GM12878 (cell line): ENCODE measurements at regions of chr2 and their contacts with region 1.

Region 1: GRCh38 chr2:64865073-64865830 is 123.9 kb upstream of the SLC1A4 start:
- DNase-seq: no peak
- ATAC-seq: peak; percentile 84
- H3K4me3 ChIP-seq: peak overlapping the region; percentile 82
- H3K27ac ChIP-seq: peak overlapping the region; percentile 70
- H3K4me1 ChIP-seq: peaks cover 49% of the 10 kb centered on the region
- H3K27me3 ChIP-seq: no peaks in the 10 kb centered on the region
- CTCF ChIP-seq: peak; percentile 62 to 79 (median 64); a peak in 5 of 6 replicates
- EP300 ChIP-seq: no peak
- POLR2A ChIP-seq: no peak
- RAD21 ChIP-seq: peak; percentile 71

Region 2: GRCh38 chr2:64595397-64596160 is 269.7 kb before region 1 on chr2:
- CTCF ChIA-PET with region 1: interaction called, 7 read pairs
- POLR2A ChIA-PET with region 1: interaction called, 3 read pairs
- RAD21 ChIA-PET with region 1: interaction called, 6 read pairs
- SMC1A ChIA-PET with region 1: interaction called, 24 read pairs
- in situ Hi-C with region 1: loop called (anchors 10 kb)
- intact Hi-C with region 1: no loop called
- DNase-seq: no peak
- ATAC-seq: no peak
- H3K4me3 ChIP-seq: no peak overlapping the region
- H3K27ac ChIP-seq: no peak overlapping the region
- H3K4me1 ChIP-seq: peaks cover 6% of the 10 kb centered on the region; the same call in 1 of the 2 replicates
- H3K27me3 ChIP-seq: no peaks in the 10 kb centered on the region
- CTCF ChIP-seq: peak in 1 of 3 experiments; percentile 34; a peak in 2 of 6 replicates
- EP300 ChIP-seq: no peak
- POLR2A ChIP-seq: no peak
- RAD21 ChIP-seq: no peak; the same call in 1 of the 2 replicates

Region 3: DNA sequence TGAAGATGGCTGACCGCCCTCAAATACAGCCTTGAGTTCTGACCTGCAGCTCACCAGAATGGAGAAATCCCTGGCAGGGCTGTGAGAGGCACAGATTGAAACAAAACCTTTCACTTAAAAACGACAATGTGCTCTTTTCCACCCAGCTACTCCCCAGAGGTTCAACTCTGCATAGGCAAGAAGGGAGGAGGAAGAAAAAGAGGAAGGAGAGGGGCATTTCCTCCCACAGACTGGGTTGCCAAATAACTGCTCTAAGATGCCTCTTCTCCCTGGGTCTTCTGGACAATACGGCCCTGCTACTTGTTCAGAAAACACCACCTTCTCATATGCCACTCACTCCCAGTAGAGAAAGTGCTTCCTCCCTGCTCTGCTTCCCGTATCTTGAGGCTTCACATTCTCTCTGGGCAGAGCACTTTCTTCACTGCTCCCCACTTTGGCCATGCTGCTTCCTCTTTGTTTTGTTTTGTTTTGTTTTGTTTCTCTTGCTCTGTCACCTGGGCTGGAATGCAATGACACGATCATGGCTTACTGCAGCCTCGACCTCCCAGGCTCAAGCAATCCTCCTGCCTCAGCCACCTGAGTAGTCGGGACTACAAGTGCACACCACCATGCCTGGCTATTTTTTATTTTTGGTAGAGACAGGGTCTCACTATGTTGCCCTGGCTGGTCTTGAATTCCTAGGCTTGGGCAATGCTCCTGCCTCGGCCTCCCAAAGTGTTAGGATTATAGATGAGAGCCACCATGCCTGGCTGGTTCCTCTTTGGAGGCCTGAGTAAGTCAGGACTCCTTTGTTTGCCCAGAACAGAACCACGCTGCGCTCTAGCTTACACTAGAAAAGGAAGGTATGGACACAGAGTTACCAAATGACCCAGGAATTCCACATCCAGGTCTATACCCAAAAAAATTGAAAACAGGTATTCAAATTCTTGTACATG is 12.2 kb before region 1 on chr2:
- CTCF ChIA-PET with region 1: interaction called, 9 read pairs
- POLR2A ChIA-PET with region 1: no interaction called
- RAD21 ChIA-PET with region 1: interaction called, 4 read pairs
- SMC1A ChIA-PET with region 1: interaction called, 32 read pairs
- in situ Hi-C with region 1: no loop called
- intact Hi-C with region 1: no loop called
- DNase-seq: no peak
- ATAC-seq: peak; percentile 50
- H3K4me3 ChIP-seq: no peak overlapping the region
- H3K27ac ChIP-seq: no peak overlapping the region; the same call in 1 of the 2 replicates
- H3K4me1 ChIP-seq: peaks cover 8% of the 10 kb centered on the region
- H3K27me3 ChIP-seq: no peaks in the 10 kb centered on the region
- CTCF ChIP-seq: no peak
- EP300 ChIP-seq: no peak
- POLR2A ChIP-seq: no peak
- RAD21 ChIP-seq: no peak